Aorta (tissue), 5 donors: ENCODE measurements at regions of chr9 and their contacts with region 1.

Region 1: GRCh38 chr9:21549251-21549765 is 67.2 kb upstream of the IFNE start:
- DNase-seq: peak in 1 of 2 donors; percentile 43
- ATAC-seq: peak; percentile 65
- H3K4me3 ChIP-seq: no peak overlapping the region
- H3K27ac ChIP-seq: no peak overlapping the region
- H3K4me1 ChIP-seq: peaks cover 0 to 4% of the 10 kb centered on the region in 2 donors
- H3K27me3 ChIP-seq: no peaks in the 10 kb centered on the region

Region 2: DNA sequence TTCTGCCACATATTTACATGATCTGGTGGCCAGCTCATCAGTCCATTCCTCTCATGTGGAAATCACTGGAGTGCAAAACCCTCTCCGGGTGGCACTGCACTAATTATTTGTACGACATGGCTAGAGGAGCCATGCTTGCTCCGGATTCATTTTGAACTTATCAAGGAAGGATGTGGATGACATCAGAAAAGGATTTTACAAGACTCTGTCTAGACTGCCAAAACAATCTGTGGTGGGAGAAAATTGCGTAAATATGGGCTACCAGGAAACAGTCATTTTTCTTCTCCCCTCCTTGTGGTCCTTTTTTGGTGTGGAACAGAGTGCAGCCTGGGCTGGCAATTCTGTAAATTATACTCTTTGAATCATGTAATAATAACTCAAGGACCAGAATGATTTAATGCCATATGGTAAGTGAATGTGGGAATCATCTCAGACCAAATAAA is 56.2 kb after region 1 on chr9:
- intact Hi-C with region 1: loop called in 1 of 2 experiments (anchors 10 kb)
- DNase-seq: no peak
- ATAC-seq: no peak
- H3K4me3 ChIP-seq: no peak overlapping the region
- H3K27ac ChIP-seq: no peak overlapping the region
- H3K4me1 ChIP-seq: no peaks in the 10 kb centered on the region
- H3K27me3 ChIP-seq: peaks cover 0 to 2% of the 10 kb centered on the region in 2 donors

Region 3: DNA sequence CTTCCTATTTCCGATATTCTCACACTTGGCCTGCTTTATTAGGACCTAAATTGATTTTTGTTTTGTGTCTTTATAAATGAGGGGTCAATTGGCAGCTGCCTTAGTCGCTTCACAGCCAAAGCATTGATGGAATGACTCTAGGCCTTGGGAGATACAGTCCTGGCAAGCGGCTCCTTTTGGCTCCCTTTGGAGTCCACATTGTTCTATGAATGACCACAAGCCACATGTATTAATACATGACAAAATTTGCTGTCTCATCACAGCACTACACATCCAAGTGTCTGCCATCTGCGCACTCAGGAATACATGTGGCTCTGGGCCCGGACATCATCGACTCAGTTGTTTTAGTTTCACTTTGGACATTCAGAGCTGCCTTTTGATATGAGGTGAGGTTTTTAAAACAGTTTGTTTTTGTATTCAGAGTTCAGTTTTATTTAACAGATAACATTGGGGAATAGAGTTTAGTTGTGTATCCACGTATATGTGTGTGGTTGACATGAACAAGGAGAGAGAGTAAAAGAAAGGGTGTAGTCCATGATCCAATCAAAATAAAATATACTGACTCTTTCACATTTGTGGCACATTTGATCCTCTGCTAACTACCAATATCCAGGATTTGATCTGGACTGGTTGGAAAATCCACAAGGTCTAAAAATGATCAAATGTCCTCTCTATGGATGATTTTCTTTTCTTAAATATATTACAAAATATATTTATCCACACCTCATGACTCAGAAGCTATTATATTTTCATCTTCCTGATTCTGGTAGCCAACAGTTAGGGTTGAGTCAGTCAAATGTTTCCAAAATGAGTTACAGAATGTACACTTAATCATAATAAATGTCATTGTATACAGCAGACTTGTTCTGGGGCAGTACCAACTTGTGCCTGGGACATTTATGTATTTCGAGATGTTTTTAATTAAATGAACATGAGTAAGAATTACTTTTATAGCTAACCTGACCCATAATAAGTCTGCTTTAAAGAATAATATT is 139.1 kb after region 1 on chr9:
- intact Hi-C with region 1: loop called in 1 of 2 experiments (anchors 10 kb)
- DNase-seq: peak in 1 of 2 donors; percentile 49
- ATAC-seq: peak; percentile 67
- H3K4me3 ChIP-seq: no peak overlapping the region
- H3K27ac ChIP-seq: no peak overlapping the region
- H3K4me1 ChIP-seq: no peaks in the 10 kb centered on the region
- H3K27me3 ChIP-seq: no peaks in the 10 kb centered on the region

Region 4: DNA sequence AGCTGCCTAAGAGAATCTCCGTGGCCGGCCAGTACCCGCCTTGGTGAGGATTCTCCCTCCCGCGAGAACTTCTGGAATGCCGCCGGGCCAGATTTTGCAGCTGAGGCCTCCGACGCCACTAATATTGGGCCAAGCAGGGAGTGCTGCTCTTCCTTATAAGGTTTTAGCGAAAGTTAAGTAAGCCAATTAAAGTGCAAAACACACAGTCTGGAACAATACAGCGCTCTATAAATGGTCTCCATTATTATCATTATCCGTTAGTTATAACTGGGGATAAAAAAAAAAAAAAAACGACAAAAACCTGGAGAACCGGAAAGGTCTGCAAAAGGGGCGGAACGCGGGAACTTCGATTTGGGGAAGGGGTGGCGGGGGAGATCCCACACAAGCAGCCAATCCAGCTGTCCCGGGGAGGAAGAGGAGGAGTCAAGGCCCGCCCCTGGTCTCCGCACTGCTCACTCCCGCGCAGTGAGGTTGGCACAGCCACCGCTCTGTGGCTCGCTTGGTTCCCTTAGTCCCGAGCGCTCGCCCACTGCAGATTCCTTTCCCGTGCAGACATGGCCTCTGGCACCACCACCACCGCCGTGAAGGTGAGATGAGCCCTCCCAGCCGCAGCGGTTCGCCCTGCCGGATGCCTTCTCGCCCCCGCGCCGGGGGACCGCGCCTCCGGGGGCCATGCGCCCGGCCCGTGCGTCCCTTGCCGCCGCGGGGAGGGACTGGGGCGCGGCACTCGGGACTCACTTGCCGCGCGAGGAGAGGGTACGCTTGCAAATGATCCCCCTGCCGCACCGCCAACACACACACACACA is 253.1 kb after region 1 on chr9 and contains the start of gene MTAP:
- intact Hi-C with region 1: loop called in 1 of 2 experiments (anchors 5 kb)
- DNase-seq: peak; percentile 96
- ATAC-seq: peak; percentile 97
- H3K4me3 ChIP-seq: peak within 1 kb of the TSS; percentile 32 to 37
- H3K27ac ChIP-seq: peak within 1 kb of the TSS; percentile 19 to 75
- H3K4me1 ChIP-seq: no peaks in the 10 kb centered on the region
- H3K27me3 ChIP-seq: no peaks in the 10 kb centered on the region
- total RNA-seq, gene MTAP: 28.5 to 41.1 TPM